ENCODE measurements at regions of chr7 and their contacts with region 1.

Region 1: GRCh38 chr7:48109848-48110663 is 21.0 kb downstream of the UPP1 start:
- DNase-seq: no peak
- H3K4me3 ChIP-seq: no peak overlapping the region
- CTCF ChIP-seq: peak; percentile 91

Region 2: GRCh38 chr7:47945261-47946001 is 164.6 kb before region 1 on chr7:
- CTCF ChIA-PET with region 1: interaction called, 85 read pairs
- POLR2A ChIA-PET with region 1: no interaction called
- DNase-seq: no peak
- H3K4me3 ChIP-seq: no peak overlapping the region
- CTCF ChIP-seq: peak; percentile 49

Region 3: GRCh38 chr7:47979145-47979831 is 130.8 kb before region 1 on chr7 and contains the start of gene HUS1:
- CTCF ChIA-PET with region 1: interaction called, 18 read pairs
- POLR2A ChIA-PET with region 1: no interaction called
- DNase-seq: no peak
- H3K4me3 ChIP-seq: peak within 1 kb of the TSS; percentile 78
- CTCF ChIP-seq: no peak

Region 4: DNA sequence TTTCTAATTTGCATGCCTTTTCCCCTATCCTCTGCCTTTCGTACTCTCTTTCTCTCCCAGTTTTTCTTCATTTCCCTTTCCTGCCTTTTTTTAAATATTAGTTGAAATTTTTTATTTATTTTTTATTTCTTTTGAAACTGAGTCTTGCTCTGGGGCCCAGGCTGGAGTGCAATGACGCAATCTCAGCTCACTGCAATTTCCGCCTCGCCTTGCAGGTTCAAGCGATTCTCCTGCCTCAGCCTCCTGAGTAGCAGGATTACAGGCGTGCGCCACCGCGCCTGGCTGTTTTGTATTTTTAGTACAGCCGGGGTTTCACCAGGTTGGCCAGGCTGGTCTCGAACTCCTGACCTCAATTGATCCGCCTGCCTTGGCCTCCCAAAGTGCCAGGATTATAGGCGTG is 110.6 kb before region 1 on chr7:
- CTCF ChIA-PET with region 1: interaction called, 320 read pairs
- POLR2A ChIA-PET with region 1: no interaction called
- DNase-seq: no peak
- H3K4me3 ChIP-seq: no peak overlapping the region
- CTCF ChIP-seq: no peak

Region 5: DNA sequence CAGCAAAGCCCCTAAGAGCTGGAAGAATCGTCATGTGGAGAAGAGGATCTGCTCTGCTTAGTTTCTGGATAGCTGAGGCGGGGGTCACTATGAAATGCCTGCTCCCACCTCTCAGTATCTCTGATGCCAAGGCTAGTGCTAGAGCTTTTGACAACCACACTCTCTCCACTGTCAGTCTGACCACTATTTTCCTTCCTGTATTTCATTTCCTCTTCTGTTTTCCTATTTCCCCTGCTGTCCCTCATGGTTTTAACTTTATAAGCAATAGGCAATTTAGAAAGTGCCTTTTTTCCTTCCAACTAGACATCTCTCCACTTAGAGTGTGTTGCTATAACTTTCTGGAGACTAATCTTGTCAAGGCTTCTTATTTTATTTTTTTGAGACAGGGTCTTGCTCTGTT is 51.1 kb before region 1 on chr7:
- CTCF ChIA-PET with region 1: no interaction called
- POLR2A ChIA-PET with region 1: no interaction called
- DNase-seq: no peak
- H3K4me3 ChIP-seq: no peak overlapping the region
- CTCF ChIP-seq: no peak

Region 6: GRCh38 chr7:48088559-48089045 is 21.5 kb before region 1 on chr7:
- CTCF ChIA-PET with region 1: interaction called, 81 read pairs
- POLR2A ChIA-PET with region 1: interaction called, 5 read pairs
- DNase-seq: peak; percentile 72
- H3K4me3 ChIP-seq: peak overlapping the region; percentile 78
- CTCF ChIP-seq: no peak

Region 7: GRCh38 chr7:48130658-48131108 is 20.6 kb after region 1 on chr7:
- CTCF ChIA-PET with region 1: interaction called, 17 read pairs
- POLR2A ChIA-PET with region 1: no interaction called
- DNase-seq: peak; percentile 28
- H3K4me3 ChIP-seq: no peak overlapping the region
- CTCF ChIP-seq: no peak

Region 8: GRCh38 chr7:48154792-48155413 is 44.8 kb after region 1 on chr7:
- CTCF ChIA-PET with region 1: interaction called, 21 read pairs
- POLR2A ChIA-PET with region 1: no interaction called
- DNase-seq: no peak
- H3K4me3 ChIP-seq: no peak overlapping the region
- CTCF ChIP-seq: peak; percentile 73